Mammary epithelial cell (primary cell): ENCODE measurements at regions of chr16 and their contacts with region 1.

Region 1: DNA sequence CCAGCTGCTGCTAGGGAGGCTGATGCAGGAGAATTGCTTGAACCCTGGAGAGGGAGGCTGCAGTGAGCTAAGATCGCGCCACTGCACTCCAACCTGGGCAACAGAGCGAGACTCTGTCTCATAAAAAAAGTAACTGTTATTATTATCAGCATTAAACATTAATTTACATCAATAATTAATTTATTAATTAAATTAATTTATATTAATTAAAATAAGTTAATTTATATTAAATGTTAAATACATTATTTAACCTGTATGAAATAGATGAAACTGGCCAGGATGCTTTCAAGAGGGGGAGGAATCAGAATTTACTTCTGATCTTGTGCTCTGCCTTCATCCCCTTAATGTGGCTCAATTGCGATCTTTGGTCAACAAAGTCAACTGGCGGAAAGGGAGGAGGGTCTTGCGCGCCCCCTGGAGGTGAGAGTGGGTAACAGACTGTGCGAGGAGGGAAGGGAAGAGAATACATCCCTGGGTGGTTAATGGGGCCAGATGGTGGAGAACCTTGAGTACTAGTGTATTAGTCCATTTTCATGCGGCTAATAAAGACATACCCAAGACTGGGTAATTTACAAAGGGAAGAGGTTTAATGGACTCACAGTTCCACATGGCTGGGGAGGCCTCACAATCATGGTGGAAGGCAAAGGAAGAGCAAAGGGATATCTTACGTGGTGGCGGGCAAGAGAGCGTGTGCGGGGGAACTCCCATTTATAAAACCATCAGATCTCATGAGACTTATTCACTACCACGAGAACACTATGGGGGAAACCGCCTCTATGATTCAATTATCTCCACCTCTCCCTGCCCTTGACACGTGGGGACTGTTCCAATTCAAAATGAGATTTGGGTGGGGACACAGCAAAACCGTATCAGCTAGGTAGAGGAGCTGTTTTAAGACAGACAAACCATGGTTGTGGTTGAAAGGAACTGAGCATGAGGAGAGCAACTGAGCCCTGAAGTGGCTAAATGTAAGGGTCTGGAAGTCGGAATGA is 15.7 kb upstream of the CPPED1 start:
- DNase-seq: peak; percentile 43
- H3K4me3 ChIP-seq: no peak overlapping the region
- H3K27ac ChIP-seq: no peak overlapping the region
- H3K4me1 ChIP-seq: no peaks in the 10 kb centered on the region
- H3K27me3 ChIP-seq: no peaks in the 10 kb centered on the region
- CTCF ChIP-seq: peak; percentile 89 to 90

Region 2: DNA sequence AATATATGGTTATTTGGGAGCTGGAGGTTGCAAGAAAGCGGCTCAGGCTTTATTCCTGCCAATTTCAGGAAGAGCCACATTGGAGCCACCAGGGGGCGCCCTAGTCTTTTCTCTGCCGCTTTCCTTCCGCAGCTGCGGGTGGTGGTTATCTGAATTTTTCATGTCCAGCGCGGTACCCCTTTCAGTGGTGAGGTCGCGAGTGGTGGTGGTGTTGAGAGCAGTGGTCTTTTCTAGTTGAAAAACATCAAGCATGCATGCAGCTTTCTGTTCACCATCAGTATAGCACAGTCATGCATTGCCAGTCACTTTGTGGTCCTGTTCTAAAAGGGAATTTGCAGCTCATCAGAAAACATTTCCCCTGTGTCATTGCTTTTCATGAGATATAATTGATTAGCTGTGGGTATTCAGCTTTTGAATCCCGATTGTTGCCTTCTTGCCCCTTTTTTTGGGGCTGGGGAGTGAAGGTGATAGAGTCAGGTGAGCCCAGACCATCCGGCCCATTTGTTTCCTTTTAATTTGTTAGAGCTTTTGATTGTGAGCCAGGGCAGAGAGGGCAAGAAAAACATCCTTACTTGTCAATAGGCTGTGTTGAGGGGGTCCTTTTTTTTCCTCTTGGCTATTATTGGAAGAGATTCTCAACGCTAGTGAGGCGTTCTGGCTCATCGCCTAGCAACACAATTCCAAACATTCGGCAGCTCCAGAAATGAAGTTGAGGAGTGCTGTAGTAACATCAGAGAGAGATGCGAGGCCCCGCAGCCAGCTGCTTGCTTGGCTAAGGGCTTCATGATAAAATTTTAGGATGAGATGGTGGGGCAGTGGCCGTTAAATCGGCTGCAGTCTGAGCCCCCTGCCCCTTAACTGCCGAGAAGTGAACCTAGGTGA is 723.9 kb before region 1 on chr16:
- CTCF ChIA-PET with region 1: no interaction called
- dilution Hi-C with region 1: no loop called
- in situ Hi-C with region 1: loop called in 1 of 2 experiments (anchors 10 kb)
- intact Hi-C with region 1: loop called (anchors 1 kb)
- DNase-seq: peak; percentile 10
- H3K4me3 ChIP-seq: no peak overlapping the region
- H3K27ac ChIP-seq: no peak overlapping the region
- H3K4me1 ChIP-seq: no peaks in the 10 kb centered on the region
- H3K27me3 ChIP-seq: no peaks in the 10 kb centered on the region
- CTCF ChIP-seq: peak; percentile 87

Region 3: DNA sequence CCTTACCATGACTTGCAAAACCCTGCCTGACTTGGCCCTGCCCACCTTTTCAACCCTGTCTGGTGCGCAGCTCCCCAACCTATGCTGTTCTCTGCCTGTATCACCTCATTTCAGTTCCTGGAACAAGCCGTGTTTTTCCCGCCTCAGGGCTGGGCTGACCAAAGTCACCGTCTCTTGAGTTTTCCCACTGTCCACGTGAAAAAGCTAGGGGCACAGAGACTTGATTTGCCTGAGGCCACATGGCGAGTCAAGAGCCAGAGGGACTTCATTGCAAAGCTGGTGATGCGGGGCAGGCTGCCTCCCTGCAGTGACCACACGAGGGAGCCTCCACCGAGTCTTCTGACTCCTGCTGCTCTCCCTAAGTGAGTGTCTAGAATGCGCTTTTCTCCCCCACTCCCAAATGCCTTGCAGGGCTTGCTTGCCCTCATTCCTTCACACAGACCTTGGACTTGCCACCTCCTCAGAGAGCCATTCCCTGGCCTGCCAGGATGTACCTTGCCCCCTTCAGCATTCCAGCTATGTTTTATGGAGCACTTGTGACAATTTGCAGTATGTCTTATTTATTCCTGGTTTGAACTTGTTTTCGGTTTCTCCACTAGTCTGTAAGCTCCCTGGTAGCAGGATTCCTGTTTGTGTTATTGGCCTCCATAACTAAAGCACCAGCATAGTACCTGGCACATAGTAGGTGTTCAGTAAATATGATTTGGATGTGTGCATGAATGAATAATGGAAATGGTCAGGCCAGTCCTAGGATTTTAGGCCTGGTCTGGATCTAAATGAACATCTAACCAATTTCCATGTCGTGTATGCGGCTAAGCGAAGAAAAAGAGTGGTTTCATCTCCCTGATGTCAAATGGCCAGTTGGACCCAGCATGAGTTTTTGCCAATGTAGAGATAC is 590.6 kb before region 1 on chr16:
- CTCF ChIA-PET with region 1: no interaction called
- dilution Hi-C with region 1: no loop called
- in situ Hi-C with region 1: no loop called
- intact Hi-C with region 1: loop called (anchors 10 kb)
- DNase-seq: peak; percentile 40
- H3K4me3 ChIP-seq: no peak overlapping the region
- H3K27ac ChIP-seq: no peak overlapping the region
- H3K4me1 ChIP-seq: no peaks in the 10 kb centered on the region
- H3K27me3 ChIP-seq: no peaks in the 10 kb centered on the region
- CTCF ChIP-seq: peak; percentile 47 to 65

Region 4: DNA sequence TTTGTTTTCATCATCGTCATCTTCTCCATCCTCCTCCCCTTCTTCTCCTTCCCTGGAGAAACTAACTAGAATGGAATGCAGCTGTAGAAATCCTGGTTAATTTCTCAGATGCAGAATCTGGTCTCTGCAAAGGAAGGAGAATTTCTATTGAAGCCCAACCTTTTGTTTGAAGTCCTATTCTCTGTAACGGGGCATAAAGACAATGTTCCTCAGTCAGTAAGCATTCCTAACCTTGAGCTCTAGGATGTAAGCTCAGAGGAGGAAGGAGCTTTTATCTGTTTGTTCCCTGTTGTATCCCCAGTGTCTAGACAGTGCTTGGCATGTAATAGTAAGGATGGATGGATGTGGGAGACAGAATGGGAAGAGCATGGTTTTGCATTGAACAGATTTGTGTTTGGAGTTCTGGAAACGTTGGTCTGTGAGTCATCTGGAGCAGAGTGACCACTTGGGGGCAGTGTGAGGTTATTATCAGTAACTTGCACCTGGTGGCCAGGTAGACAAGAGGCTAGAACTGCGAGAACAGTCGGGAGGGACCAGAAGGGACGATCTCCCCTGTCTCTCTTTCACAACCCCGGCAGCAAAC is 479.2 kb before region 1 on chr16:
- CTCF ChIA-PET with region 1: no interaction called
- dilution Hi-C with region 1: no loop called
- in situ Hi-C with region 1: no loop called
- intact Hi-C with region 1: loop called (anchors 2 kb)
- DNase-seq: peak; percentile 59
- H3K4me3 ChIP-seq: no peak overlapping the region
- H3K27ac ChIP-seq: no peak overlapping the region
- H3K4me1 ChIP-seq: peaks cover 8% of the 10 kb centered on the region
- H3K27me3 ChIP-seq: no peaks in the 10 kb centered on the region
- CTCF ChIP-seq: peak; percentile 39 to 57

Region 5: DNA sequence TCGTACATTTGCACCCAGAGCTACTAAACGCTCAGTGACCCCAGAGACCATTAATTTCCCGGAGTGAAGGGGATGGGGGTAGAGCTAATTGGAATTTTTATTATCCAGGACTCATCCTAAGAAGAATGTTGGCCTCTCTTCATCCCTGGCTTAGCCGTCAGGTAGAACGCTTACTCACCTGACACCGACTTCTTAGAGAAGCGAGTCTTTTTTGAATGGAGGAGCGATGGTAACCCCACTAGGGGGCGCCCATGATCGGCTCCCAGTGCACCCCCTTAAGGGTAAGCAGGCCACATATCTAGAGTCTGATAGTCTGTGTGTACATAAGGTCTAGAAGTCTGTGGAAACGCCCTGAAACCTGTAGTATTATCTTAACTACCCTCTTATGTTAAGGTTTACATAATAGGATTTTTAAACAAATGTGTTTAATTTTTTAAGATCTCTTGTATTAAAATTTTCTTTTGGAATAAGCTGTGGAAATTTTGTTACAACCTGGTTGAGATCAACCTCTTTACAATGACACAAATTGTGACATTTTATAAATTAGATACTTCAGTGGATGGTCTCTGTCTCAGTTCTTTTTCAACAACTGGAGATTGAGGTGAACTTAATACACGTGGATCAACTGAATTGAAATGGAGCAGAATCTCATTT is 245.6 kb before region 1 on chr16:
- CTCF ChIA-PET with region 1: interaction called, 3 read pairs
- dilution Hi-C with region 1: no loop called
- in situ Hi-C with region 1: no loop called
- intact Hi-C with region 1: loop called (anchors 2 kb)
- DNase-seq: peak; percentile 38
- H3K4me3 ChIP-seq: no peak overlapping the region
- H3K27ac ChIP-seq: no peak overlapping the region
- H3K4me1 ChIP-seq: no peaks in the 10 kb centered on the region
- H3K27me3 ChIP-seq: no peaks in the 10 kb centered on the region
- CTCF ChIP-seq: peak; percentile 29 to 55

Region 6: GRCh38 chr16:12874186-12874585 is 54.8 kb after region 1 on chr16:
- CTCF ChIA-PET with region 1: no interaction called
- dilution Hi-C with region 1: no loop called
- in situ Hi-C with region 1: no loop called
- intact Hi-C with region 1: no loop called
- DNase-seq: peak; percentile 73
- H3K4me3 ChIP-seq: no peak overlapping the region
- H3K27ac ChIP-seq: no peak overlapping the region
- H3K4me1 ChIP-seq: peaks cover 7% of the 10 kb centered on the region
- H3K27me3 ChIP-seq: no peaks in the 10 kb centered on the region
- CTCF ChIP-seq: no peak

Region 7: DNA sequence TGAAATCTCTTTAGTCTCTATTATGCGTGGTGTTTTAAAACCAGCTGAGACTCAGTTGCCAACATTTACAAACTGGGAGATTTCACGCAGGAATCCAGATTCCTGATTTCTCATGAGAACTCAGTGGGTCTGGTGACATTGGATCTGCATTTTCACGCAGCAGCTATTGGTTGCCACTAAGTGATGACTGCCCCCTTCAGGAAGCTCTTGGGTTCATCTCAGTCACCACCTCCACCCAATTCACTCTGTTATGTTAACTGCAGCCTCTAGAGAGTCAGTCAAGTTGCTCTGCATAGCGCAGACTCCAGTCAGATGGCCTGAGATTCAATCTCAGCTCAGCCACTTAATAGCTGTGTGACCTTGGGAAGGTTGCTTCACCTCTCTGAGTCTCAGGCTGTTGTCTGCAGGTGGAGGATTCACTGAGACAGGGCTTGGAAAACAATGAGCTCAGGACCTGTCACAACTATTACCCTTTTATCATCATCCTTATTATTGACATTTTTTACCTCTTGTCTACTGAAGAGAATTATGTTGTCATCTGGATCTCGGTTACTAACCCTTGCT is 88.3 kb after region 1 on chr16:
- CTCF ChIA-PET with region 1: no interaction called
- dilution Hi-C with region 1: no loop called
- in situ Hi-C with region 1: no loop called
- intact Hi-C with region 1: no loop called
- DNase-seq: no peak
- H3K4me3 ChIP-seq: no peak overlapping the region
- H3K27ac ChIP-seq: no peak overlapping the region
- H3K4me1 ChIP-seq: peaks cover 9% of the 10 kb centered on the region
- H3K27me3 ChIP-seq: no peaks in the 10 kb centered on the region
- CTCF ChIP-seq: peak in 1 of 2 donors; percentile 7